Motor neuron (in vitro differentiated cells): ENCODE measurements at regions of chr6 and their contacts with region 1.

Region 1: DNA sequence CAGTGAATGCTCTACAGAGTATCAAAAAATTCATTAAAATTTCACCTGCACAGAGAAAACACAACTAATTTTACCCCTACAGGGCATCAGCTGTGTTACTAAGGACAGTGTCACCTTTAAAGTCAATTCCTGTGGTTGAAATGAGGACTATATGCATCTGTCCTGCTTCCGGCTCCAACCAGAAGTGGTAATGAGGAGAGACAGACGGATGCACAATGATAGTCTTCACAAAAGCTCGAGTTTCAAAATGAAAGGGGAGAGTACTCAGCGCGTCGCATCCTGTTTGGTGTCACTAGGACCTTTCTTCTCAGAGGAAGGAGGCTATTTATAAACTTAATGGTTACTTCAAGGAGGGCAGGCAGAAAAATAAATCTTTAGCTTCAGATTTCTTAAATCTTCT is 86.5 kb downstream of the LYRM4 start:
- ATAC-seq: peak in 5 of 8 experiments; percentile 26 to 66 (median 53)
- H3K4me3 ChIP-seq: no peak overlapping the region
- H3K27ac ChIP-seq: peak overlapping the region; percentile 46 to 48
- H3K4me1 ChIP-seq: peaks cover 43 to 44% of the 10 kb centered on the region in 2 donors

Region 2: DNA sequence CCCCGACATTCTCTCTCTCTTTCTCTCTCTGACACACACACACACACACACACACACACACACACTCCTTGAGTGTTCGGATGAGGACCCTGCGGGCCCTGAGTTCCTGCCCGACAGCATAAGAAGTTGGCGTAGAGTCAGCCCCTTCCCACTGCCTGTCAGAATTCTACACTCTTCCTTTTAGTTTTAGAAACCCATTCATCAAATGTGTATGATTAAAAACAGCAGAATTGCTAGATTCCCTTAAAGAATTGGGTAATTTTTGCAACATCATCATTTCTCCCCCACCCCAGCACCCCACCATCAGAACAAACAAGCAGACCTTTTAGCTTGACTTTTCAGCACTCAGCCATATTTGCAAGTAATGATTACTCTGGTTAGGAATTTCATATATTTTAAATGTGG is 409.8 kb after region 1 on chr6:
- in situ Hi-C with region 1: no loop called
- ATAC-seq: peak in 3 of 8 experiments; percentile 12 to 53 (median 24)
- H3K4me3 ChIP-seq: no peak overlapping the region
- H3K27ac ChIP-seq: no peak overlapping the region
- H3K4me1 ChIP-seq: no peaks in the 10 kb centered on the region

Region 3: DNA sequence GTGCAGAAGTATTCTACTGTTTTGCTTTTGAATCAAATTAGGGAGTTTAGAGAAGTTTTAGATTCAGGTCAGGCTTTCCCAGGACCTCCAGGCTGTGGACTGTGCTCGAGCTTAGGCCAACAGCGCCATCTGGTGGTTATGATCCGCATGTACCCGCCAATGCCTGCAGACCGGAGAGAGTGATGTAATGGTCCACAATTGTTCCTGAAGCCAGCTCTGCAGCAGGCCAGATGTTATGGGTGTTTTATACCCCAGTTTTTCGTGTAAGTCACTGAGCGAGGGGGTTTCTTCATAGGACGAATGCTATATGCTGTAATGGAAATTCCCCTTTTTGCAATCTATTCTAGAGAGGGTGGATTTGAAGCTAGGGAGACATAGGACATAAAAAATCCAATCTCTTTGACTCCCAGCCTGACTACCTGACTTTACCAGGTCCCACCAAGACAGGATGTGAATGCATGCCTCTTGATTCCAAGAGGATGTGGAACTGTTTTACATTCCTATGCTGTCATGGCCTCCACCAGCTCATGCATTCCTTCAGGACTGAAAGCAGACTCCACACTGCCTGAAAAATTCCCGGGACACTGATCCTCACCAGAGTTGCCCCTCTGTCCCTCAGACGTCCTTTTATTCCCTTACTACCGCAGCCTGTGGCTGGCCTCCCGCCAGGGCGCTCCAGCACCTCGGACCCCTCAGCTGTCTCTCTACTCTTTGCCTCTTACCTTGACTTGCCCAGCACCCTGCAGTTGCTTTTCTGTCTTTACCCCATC is 1373.1 kb after region 1 on chr6:
- in situ Hi-C with region 1: loop called in 1 of 9 experiments (anchors 25 kb)
- ATAC-seq: peak; percentile 88 to 100 (median 96)
- H3K4me3 ChIP-seq: peak overlapping the region in 4 of 5 donors; percentile 9 to 26 (median 20)
- H3K27ac ChIP-seq: no peak overlapping the region
- H3K4me1 ChIP-seq: peaks cover 12 to 17% of the 10 kb centered on the region in 2 donors